Heart right ventricle (tissue), 16 donors: ENCODE measurements at regions of chr6 and their contacts with region 1.

Region 1: DNA sequence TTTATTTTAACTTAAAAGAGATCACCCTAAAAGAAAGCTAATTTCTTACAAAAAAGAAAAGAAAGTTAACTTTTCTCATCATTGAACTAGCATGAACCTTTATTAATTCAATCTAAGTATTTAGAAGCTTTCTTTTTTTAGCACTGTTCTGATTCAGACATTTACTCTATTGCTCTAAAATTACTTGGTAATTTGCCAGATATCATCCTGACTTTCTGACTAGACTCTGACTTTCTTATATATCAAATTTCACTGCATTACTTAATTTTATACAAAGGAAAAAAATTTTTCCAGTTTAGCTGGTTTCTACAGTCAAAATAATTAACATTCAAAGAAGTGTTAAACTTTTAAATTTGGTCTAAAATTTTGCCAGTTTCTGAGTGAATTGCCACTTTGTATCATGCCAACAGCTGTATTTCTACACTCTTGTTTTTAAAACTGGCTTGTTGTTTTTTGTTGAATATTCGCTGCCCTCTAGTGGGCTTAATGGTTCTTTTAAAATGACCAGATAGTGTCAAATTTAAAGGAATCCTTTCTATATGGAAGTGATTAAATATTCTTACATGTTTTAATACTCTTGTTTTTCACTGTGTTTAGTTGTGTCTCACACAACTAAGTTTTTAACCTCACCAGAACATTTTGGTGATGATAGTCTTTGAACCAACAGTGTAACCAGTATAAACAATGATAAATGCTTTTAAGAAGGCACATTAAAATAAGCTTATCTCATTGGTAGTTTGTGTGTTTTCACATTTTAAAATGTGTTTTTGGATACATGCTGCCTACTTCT is 102.0 kb downstream of the POPDC3 start:
- DNase-seq: no peak
- ATAC-seq: no peak
- H3K4me3 ChIP-seq: no peak overlapping the region
- H3K27ac ChIP-seq: no peak overlapping the region
- H3K4me1 ChIP-seq: no peaks in the 10 kb centered on the region
- H3K27me3 ChIP-seq: peaks cover 0 to 17% (median 4%) of the 10 kb centered on the region in 7 donors
- CTCF ChIP-seq: peak in 8 of 9 donors; percentile 18 to 61 (median 48)

Region 2: DNA sequence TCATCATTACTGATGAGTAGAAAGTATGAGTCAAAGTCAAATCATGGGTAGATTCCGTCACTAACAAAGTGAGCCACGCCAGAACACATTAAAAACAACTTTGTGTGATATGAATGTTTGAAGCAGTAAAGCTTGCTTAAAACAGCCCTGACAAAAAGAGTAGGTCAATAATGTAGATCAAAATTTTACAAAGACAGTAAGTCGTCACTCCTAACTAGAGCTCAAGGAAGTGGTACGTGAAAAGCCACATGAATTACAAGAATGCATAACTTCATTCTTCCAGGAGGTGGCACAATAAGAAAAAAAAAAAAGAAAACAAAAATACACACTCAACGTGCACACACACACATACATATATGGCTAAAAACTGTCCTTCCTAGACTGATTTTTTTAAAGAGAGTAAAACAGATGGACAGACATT is 288.0 kb before region 1 on chr6:
- intact Hi-C with region 1: loop called in 4 of 10 experiments (anchors 10 kb)
- DNase-seq: no peak
- ATAC-seq: peak in 1 of 8 donors; percentile 15
- H3K4me3 ChIP-seq: no peak overlapping the region
- H3K27ac ChIP-seq: no peak overlapping the region
- H3K4me1 ChIP-seq: peaks cover 0 to 17% (median 0%) of the 10 kb centered on the region in 9 donors
- H3K27me3 ChIP-seq: no peaks in the 10 kb centered on the region
- CTCF ChIP-seq: peak in 7 of 9 donors; percentile 19 to 43 (median 35)

Region 3: DNA sequence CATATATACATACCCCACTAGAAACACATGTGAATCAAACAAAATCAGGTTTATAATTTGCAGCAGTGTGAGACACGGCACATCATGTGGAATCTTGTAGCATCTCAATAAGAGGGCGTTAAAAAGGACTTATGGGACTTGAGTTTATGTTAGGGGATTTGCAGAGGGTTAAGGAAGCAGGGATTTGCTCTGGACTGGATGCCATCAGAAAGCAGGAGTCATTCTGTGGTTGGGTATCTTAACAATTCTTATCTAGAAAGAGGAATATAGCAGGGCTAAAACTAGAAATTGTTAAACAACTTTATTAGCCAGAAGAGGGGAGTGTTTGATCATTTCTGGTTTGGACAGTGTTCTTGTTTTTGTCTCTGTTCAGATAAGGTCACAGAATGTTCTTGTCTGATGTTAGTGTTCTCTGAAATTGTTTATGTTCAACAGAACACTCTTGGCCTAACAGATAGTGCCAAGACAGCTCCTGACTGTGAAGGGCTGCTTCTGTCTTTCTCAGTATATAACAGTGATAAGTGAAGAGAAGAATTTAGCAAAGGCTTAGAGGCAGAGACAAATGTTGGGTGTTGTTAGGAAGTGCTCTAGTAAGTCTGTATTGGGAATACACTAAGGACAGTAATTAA is 81.7 kb before region 1 on chr6:
- intact Hi-C with region 1: loop called in 1 of 10 experiments (anchors 5 kb)
- DNase-seq: no peak
- ATAC-seq: peak in 2 of 8 donors; percentile 40 to 92
- H3K4me3 ChIP-seq: no peak overlapping the region
- H3K27ac ChIP-seq: no peak overlapping the region
- H3K4me1 ChIP-seq: no peaks in the 10 kb centered on the region
- H3K27me3 ChIP-seq: no peaks in the 10 kb centered on the region
- CTCF ChIP-seq: peak in 2 of 9 donors; percentile 11 to 22

Region 4: DNA sequence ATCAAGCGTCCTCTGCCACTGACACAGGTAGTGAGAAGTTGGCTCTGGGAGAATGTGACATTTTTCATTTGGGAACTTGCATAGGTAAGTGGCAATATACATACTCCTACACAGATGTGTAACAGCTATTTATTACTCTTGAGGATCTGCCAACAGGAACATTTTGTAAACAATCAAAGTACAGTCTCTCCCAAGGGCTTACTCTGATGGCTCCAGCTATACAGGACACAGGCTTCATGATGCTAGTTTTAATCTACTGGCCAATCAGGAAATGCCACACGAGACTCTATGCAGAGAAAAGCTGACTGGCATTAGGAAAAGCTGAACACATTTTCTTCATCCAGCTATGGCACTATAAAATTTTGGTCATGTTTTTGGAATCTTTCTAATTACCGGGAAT is 44.2 kb after region 1 on chr6:
- intact Hi-C with region 1: no loop called
- DNase-seq: no peak
- ATAC-seq: no peak
- H3K4me3 ChIP-seq: no peak overlapping the region
- H3K27ac ChIP-seq: no peak overlapping the region
- H3K4me1 ChIP-seq: peaks cover 0 to 7% (median 0%) of the 10 kb centered on the region in 9 donors
- H3K27me3 ChIP-seq: no peaks in the 10 kb centered on the region
- CTCF ChIP-seq: no peak

Region 5: GRCh38 chr6:105207524-105208269 is 129.9 kb after region 1 on chr6:
- intact Hi-C with region 1: no loop called
- DNase-seq: no peak
- ATAC-seq: no peak
- H3K4me3 ChIP-seq: no peak overlapping the region
- H3K27ac ChIP-seq: no peak overlapping the region
- H3K4me1 ChIP-seq: peaks cover 0 to 6% (median 0%) of the 10 kb centered on the region in 9 donors
- H3K27me3 ChIP-seq: no peaks in the 10 kb centered on the region
- CTCF ChIP-seq: no peak